ENCODE measurements at regions of chr15 and their contacts with region 1.

Region 1: DNA sequence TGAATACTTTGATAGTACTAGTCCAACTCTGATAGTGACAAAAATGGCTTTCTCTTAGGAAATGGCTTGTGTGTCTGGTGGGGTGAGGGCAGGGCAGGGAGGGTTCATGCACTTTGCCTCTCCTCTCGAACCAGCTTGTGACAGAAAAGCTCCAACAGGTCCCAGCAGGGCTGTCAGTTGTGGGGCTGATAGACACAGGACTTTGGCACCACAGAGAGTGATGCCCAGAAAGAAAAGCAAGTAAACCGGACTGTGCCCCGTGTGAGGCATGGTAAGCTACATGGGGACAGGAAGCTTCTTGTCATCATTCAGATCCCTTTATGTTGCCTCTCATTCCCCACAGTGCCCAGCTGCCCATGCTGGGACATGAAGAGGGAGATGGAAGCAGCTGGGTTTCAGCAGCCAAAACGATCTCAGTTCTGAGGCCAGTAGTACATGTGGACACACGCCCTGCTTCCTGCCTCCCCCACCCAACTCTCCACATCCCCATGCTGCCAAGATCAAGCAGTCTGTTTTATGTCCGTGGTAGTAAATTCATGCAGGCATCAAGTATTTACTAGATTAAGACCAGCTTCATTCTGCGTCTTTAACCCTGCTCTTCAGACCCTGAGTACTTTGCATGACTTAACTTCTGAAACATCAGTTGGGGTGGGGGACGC is 29.7 kb upstream of the LIPC start:
- DNase-seq: no peak
- H3K4me3 ChIP-seq: no peak overlapping the region
- H3K27ac ChIP-seq: no peak overlapping the region
- H3K27me3 ChIP-seq: no peaks in the 10 kb centered on the region
- CTCF ChIP-seq: no peak

Region 2: GRCh38 chr15:58597943-58598828 is 196.1 kb after region 1 on chr15:
- intact Hi-C with region 1: loop called in 1 of 2 experiments (anchors 10 kb)
- DNase-seq: no peak
- H3K4me3 ChIP-seq: no peak overlapping the region
- H3K27ac ChIP-seq: peak overlapping the region in 4 of 59 donors; percentile 3 to 43 (median 14)
- H3K27me3 ChIP-seq: no peaks in the 10 kb centered on the region
- CTCF ChIP-seq: no peak

Measured in dorsolateral prefrontal cortex (tissue), 120 donors.